ENCODE measurements at regions of chr11 and their contacts with region 1.

Region 1: DNA sequence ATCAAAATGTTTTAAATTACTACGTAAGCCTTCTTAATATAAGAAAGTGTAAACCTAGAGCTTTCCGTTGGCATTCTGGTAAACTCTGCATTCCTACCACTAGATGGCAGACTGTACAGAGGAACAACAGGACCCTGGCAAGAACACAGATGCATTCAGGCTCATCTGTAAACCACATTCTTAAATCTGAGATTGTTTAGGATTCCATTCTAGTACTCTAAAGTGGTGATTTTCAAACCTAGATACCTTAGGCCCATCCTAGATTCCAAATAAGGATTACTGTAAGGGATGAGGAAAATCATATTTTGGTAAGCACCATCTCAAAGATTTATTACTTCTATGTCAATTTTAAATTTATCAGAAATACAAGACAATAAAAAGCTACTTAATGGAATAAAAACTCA is 26.9 kb downstream of the PICALM start:
- DNase-seq: peak; percentile 88
- H3K4me3 ChIP-seq: no peak overlapping the region
- H3K27ac ChIP-seq: no peak overlapping the region
- H3K27me3 ChIP-seq: no peaks in the 10 kb centered on the region
- CTCF ChIP-seq: peak; percentile 79

Region 2: DNA sequence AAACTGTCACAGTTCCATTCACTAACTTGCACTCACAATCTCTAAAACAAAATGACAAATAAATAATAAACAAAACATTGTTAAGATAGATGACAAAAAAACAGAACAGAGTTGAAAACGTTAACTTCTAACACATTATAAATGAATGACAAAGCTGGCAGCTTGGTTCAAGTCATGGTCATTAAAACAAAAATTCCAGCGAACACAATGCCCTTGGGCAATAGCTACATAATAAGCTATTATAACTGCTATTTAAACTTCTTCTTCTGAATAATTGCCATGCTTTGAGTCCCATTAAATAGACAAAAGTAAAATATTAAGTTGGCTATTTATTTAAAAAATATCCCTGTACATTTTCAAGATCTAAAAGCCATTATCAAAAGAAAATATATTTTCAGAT is 27.8 kb before region 1 on chr11:
- CTCF ChIA-PET with region 1: interaction called, 32 read pairs
- POLR2A ChIA-PET with region 1: no interaction called
- DNase-seq: no peak
- H3K4me3 ChIP-seq: no peak overlapping the region
- H3K27ac ChIP-seq: no peak overlapping the region
- H3K27me3 ChIP-seq: no peaks in the 10 kb centered on the region
- CTCF ChIP-seq: no peak

Region 3: DNA sequence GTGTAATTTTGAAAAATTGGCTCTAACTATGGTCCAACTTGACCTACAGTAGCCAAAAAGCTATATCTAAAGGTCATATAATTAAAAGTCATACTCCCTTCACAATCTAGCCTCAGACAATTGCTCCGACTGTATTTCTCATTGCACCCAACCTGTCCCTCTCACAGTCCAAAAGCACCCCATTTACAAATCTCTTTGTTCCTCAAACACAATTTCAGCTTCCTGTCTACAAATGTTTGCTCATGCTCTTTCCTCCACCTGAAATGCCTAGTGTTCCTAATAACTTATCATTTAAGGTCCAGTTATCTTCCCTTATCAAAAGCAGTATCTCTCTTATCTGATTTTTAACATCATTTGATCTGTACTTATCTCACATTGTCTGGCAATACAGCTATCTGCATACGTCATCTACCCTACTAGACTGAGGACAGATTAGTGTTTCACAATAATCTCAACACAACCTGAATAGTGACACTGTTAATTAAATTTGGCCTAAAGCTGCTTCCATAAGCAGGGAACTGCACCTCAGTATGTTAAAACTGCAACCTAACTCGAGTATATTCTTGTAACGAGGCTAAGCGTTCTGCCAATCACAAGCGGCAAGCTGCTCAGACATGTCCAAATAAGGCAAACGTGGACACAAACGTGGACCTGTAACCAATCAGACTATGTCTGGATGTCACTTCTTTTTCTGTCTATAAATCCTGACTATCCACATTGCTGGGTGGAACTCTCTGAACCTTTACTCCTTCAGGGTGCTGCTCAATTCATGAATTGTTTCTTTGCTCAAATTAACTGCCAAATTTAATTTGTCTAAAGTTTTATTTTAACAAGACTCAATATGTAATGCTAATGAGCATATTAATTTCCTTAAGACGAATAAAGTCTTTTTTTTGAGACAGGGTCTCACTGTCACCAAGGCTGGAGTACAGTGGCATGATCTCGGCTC is 11.0 kb after region 1 on chr11:
- CTCF ChIA-PET with region 1: interaction called, 45 read pairs
- POLR2A ChIA-PET with region 1: no interaction called
- DNase-seq: no peak
- H3K4me3 ChIP-seq: no peak overlapping the region
- H3K27ac ChIP-seq: no peak overlapping the region
- H3K27me3 ChIP-seq: no peaks in the 10 kb centered on the region
- CTCF ChIP-seq: no peak

Region 4: GRCh38 chr11:86193297-86194095 is 151.5 kb after region 1 on chr11:
- CTCF ChIA-PET with region 1: interaction called, 37 read pairs
- POLR2A ChIA-PET with region 1: no interaction called
- DNase-seq: peak; percentile 47
- H3K4me3 ChIP-seq: no peak overlapping the region
- H3K27ac ChIP-seq: no peak overlapping the region
- H3K27me3 ChIP-seq: no peaks in the 10 kb centered on the region
- CTCF ChIP-seq: peak; percentile 85

Region 5: GRCh38 chr11:86218125-86219084 is 176.4 kb after region 1 on chr11:
- CTCF ChIA-PET with region 1: interaction called, 52 read pairs
- POLR2A ChIA-PET with region 1: no interaction called
- DNase-seq: peak; percentile 41
- H3K4me3 ChIP-seq: peak overlapping the region; percentile 29
- H3K27ac ChIP-seq: no peak overlapping the region
- H3K27me3 ChIP-seq: no peaks in the 10 kb centered on the region
- CTCF ChIP-seq: peak; percentile 97

Measured in AG04450 (cell line).